ENCODE measurements at regions of chr3 and their contacts with region 1.

Region 1: DNA sequence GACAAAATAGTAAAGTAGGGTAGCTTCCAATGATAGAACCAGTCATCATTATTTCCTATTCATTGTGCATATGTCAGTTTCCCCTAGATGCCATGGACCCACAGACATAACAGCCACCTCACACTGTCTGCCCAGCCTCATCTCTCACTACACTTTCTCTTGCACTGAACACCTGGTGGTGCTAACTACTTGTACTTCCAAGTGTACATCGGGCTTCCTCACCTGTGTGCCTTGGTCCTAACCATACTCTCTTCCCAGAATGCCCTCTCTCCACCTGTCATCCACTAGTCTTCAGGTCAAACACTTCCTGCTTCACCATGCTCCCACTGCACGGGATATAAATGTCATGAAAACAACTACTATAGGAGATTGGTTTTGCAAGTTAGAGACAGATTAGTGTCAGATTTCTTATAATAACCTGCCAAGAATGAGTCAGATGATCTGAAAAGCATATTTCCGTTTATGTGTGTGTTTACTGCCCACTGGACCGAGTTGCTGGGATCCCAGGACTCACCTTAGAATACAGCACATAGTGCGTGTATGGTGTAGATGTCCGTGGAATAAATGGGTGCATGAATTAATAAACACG is 21.3 kb downstream of the PLA1A start:
- DNase-seq: no peak
- ATAC-seq: no peak
- H3K4me3 Mint-ChIP-seq: no peak overlapping the region
- H3K27ac Mint-ChIP-seq: no peak overlapping the region
- H3K4me1 Mint-ChIP-seq: peaks cover 8% of the 10 kb centered on the region
- H3K27me3 Mint-ChIP-seq: no peaks in the 10 kb centered on the region
- CTCF ChIP-seq: no peak

Region 2: DNA sequence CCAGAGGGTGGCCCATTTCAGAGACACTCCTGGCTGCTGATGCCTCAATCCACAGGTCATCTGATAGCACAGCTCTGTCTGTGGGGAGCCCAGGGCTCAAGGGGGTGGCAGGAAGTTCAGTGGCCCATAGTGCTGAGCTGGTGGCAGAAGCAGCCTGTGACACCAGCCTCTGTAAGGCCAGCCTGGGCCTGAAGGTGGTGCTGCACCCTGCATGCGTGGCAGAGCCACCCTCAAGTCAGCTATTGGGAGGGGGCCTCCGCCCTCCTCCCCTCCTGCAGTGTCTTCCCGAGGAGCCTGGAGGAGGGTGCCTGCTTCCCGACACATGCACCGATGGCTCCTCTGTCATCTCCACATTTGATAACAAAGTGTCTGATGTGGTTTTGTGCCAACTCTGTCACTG is 18.3 kb before region 1 on chr3:
- CTCF ChIA-PET with region 1: no interaction called
- POLR2A ChIA-PET with region 1: interaction called, 7 read pairs
- intact Hi-C with region 1: loop called (anchors 2 kb)
- DNase-seq: no peak
- ATAC-seq: peak; percentile 87
- H3K4me3 Mint-ChIP-seq: no peak overlapping the region
- H3K27ac Mint-ChIP-seq: no peak overlapping the region
- H3K4me1 Mint-ChIP-seq: peaks cover 46% of the 10 kb centered on the region
- H3K27me3 Mint-ChIP-seq: no peaks in the 10 kb centered on the region
- CTCF ChIP-seq: no peak

Region 3: GRCh38 chr3:119657887-119658702 is 39.1 kb after region 1 on chr3:
- CTCF ChIA-PET with region 1: no interaction called
- POLR2A ChIA-PET with region 1: no interaction called
- intact Hi-C with region 1: no loop called
- DNase-seq: no peak
- ATAC-seq: no peak
- H3K4me3 Mint-ChIP-seq: no peak overlapping the region
- H3K27ac Mint-ChIP-seq: no peak overlapping the region
- H3K4me1 Mint-ChIP-seq: peaks cover 32% of the 10 kb centered on the region
- H3K27me3 Mint-ChIP-seq: no peaks in the 10 kb centered on the region
- CTCF ChIP-seq: no peak

Measured in activated B cell treated with CpG ODN at 0.5 μM for 24 hours (primary cell).